ENCODE measurements at regions of chr11 and their contacts with region 1.

Region 1: GRCh38 chr11:35822815-35823495 is 120.9 kb upstream of the LDLRAD3 start:
- DNase-seq: no peak
- H3K4me3 ChIP-seq: no peak overlapping the region
- H3K27ac ChIP-seq: no peak overlapping the region
- H3K4me1 ChIP-seq: peaks cover 0 to 2% (median 0%) of the 10 kb centered on the region in 4 experiments; a peak in 1 of 7 replicates
- H3K27me3 ChIP-seq: peaks cover 0 to 2% (median 0%) of the 10 kb centered on the region in 4 experiments; a peak in 1 of 7 replicates
- CTCF ChIP-seq: no peak
- EP300 ChIP-seq: no peak
- POLR2A ChIP-seq: no peak
- RAD21 ChIP-seq: no peak

Region 2: GRCh38 chr11:35800970-35801953 is 21.7 kb before region 1 on chr11:
- CTCF ChIA-PET with region 1: interaction called, 96 read pairs
- POLR2A ChIA-PET with region 1: no interaction called
- DNase-seq: no peak
- H3K4me3 ChIP-seq: no peak overlapping the region
- H3K27ac ChIP-seq: no peak overlapping the region
- H3K4me1 ChIP-seq: no peaks in the 10 kb centered on the region
- H3K27me3 ChIP-seq: no peaks in the 10 kb centered on the region
- CTCF ChIP-seq: no peak
- EP300 ChIP-seq: no peak
- POLR2A ChIP-seq: no peak
- RAD21 ChIP-seq: no peak

Region 3: GRCh38 chr11:35914815-35915214 is 91.9 kb after region 1 on chr11:
- CTCF ChIA-PET with region 1: interaction called, 10 read pairs
- POLR2A ChIA-PET with region 1: no interaction called
- DNase-seq: no peak
- H3K4me3 ChIP-seq: no peak overlapping the region
- H3K27ac ChIP-seq: no peak overlapping the region
- H3K4me1 ChIP-seq: peaks cover 0 to 5% (median 0%) of the 10 kb centered on the region in 4 experiments; a peak in 1 of 7 replicates
- H3K27me3 ChIP-seq: no peaks in the 10 kb centered on the region; a peak in 1 of 7 replicates
- CTCF ChIP-seq: no peak
- EP300 ChIP-seq: no peak
- POLR2A ChIP-seq: no peak
- RAD21 ChIP-seq: no peak

Region 4: DNA sequence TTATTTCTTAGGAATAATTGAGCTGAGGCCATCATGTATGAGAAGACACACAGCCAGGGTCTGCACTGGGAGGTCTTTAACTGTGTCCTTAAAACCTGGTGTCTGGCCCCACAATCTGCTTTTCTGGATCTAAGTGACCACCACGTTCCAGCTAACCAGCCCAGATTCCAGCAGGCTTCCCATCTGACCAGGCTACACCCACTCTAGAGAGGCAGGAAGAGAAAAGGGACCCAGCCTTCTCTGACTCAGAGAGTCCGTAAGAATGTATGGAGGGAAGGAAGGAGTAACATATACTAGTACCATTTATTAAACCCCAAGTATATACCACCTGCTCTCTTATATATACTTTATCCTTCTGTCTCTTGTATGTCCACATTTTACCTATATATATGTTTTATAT is 201.0 kb after region 1 on chr11:
- CTCF ChIA-PET with region 1: interaction called, 13 read pairs
- POLR2A ChIA-PET with region 1: no interaction called
- DNase-seq: no peak
- H3K4me3 ChIP-seq: no peak overlapping the region
- H3K27ac ChIP-seq: no peak overlapping the region
- H3K4me1 ChIP-seq: peaks cover 3 to 13% (median 9%) of the 10 kb centered on the region in 4 experiments
- H3K27me3 ChIP-seq: no peaks in the 10 kb centered on the region
- CTCF ChIP-seq: no peak
- EP300 ChIP-seq: no peak
- POLR2A ChIP-seq: no peak
- RAD21 ChIP-seq: no peak

Region 5: GRCh38 chr11:36073411-36074203 is 250.7 kb after region 1 on chr11:
- CTCF ChIA-PET with region 1: interaction called, 55 read pairs
- POLR2A ChIA-PET with region 1: interaction called, 7 read pairs
- DNase-seq: no peak
- H3K4me3 ChIP-seq: no peak overlapping the region
- H3K27ac ChIP-seq: peak overlapping the region; percentile 19; the same call in 1 of the 2 replicates
- H3K4me1 ChIP-seq: peaks cover 8 to 32% (median 27%) of the 10 kb centered on the region in 4 experiments
- H3K27me3 ChIP-seq: no peaks in the 10 kb centered on the region
- CTCF ChIP-seq: no peak
- EP300 ChIP-seq: no peak
- POLR2A ChIP-seq: no peak
- RAD21 ChIP-seq: no peak

Region 6: DNA sequence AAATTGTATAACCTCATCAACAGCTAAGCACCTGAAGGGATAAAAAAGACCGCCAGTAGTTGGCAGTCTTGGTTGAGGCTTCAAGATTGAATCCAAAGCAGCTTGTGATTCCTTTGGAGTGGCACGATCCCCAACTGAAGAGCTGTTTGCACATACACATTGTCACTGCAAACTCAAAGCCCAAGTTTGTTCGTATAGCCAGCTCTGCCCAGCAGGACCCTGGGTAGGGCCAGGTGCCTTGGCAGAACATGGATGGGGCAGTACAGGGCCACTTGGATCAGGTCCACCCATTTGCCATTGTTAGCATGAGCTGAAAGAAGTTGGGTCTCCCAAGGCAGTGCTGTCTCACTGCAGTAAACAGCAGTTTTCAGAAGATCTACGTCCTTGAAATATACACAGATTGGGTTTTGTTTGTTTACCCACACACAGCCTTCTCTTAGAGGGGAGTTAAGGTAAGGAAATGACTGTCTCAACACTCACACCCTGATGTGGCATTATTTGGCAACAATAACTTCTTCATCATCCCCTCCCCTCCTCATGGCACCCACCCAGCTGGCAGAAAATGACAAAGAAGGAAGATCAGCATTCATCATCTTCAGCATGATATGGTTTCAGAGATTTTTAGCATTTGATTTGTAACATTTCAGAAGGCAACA is 333.3 kb after region 1 on chr11:
- CTCF ChIA-PET with region 1: interaction called, 17 read pairs
- POLR2A ChIA-PET with region 1: no interaction called
- DNase-seq: no peak
- H3K4me3 ChIP-seq: no peak overlapping the region
- H3K27ac ChIP-seq: no peak overlapping the region
- H3K4me1 ChIP-seq: peaks cover 0 to 11% (median 3%) of the 10 kb centered on the region in 4 experiments; a peak in 3 of 7 replicates
- H3K27me3 ChIP-seq: no peaks in the 10 kb centered on the region
- CTCF ChIP-seq: peak in 1 of 3 experiments; percentile 11; a peak in 1 of 4 replicates
- EP300 ChIP-seq: no peak
- POLR2A ChIP-seq: no peak
- RAD21 ChIP-seq: peak in 1 of 2 experiments; percentile 17; a peak in 2 of 4 replicates

Region 7: DNA sequence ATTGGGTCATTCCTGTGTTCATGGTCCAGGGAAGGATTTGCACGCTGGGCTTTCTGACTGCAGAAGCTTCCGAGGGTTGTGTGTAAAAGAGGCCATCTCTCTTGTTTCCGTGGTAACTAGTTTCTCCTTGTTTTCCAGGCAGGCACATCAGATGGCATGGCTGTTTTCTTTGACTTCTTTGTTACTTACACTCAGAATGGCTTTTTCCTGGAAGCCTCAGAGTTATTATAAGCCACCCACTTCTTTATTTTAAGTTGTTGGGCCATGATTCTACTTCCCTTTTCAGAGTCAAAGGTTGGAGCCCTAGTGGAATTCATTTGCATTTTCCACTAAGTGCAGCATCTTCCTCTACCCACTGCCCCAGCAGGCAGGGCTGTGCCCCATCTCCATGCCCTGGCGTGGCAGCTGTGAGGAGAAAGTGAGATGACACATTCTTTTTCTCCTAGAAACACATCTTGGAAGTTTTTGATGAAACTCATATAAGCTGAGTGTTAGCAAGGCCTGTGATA is 568.1 kb after region 1 on chr11:
- CTCF ChIA-PET with region 1: no interaction called
- POLR2A ChIA-PET with region 1: no interaction called
- DNase-seq: no peak
- H3K4me3 ChIP-seq: no peak overlapping the region
- H3K27ac ChIP-seq: no peak overlapping the region
- H3K4me1 ChIP-seq: no peaks in the 10 kb centered on the region; a peak in 1 of 7 replicates
- H3K27me3 ChIP-seq: no peaks in the 10 kb centered on the region
- CTCF ChIP-seq: no peak
- EP300 ChIP-seq: no peak
- POLR2A ChIP-seq: no peak
- RAD21 ChIP-seq: no peak

Measured in H1 (cell line).